H1 (cell line): ENCODE measurements at regions of chr16 and their contacts with region 1.

Region 1: GRCh38 chr16:68760671-68761275 is 23.7 kb downstream of the CDH1 start:
- DNase-seq: no peak
- H3K4me3 ChIP-seq: no peak overlapping the region
- H3K27ac ChIP-seq: no peak overlapping the region
- H3K4me1 ChIP-seq: peaks cover 17 to 39% (median 36%) of the 10 kb centered on the region in 4 experiments
- H3K27me3 ChIP-seq: no peaks in the 10 kb centered on the region
- CTCF ChIP-seq: no peak
- EP300 ChIP-seq: no peak
- POLR2A ChIP-seq: no peak
- RAD21 ChIP-seq: no peak

Region 2: DNA sequence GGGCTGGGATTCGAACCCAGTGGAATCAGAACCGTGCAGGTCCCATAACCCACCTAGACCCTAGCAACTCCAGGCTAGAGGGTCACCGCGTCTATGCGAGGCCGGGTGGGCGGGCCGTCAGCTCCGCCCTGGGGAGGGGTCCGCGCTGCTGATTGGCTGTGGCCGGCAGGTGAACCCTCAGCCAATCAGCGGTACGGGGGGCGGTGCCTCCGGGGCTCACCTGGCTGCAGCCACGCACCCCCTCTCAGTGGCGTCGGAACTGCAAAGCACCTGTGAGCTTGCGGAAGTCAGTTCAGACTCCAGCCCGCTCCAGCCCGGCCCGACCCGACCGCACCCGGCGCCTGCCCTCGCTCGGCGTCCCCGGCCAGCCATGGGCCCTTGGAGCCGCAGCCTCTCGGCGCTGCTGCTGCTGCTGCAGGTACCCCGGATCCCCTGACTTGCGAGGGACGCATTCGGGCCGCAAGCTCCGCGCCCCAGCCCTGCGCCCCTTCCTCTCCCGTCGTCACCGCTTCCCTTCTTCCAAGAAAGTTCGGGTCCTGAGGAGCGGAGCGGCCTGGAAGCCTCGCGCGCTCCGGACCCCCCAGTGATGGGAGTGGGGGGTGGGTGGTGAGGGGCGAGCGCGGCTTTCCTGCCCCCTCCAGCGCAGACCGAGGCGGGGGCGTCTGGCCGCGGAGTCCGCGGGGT is 23.6 kb before region 1 on chr16 and contains the start of gene CDH1:
- CTCF ChIA-PET with region 1: interaction called, 4 read pairs
- POLR2A ChIA-PET with region 1: interaction called, 30 read pairs
- DNase-seq: peak; percentile 86 to 97
- H3K4me3 ChIP-seq: peak within 1 kb of the TSS; percentile 60 to 90 (median 84)
- H3K27ac ChIP-seq: peak within 1 kb of the TSS; percentile 50
- H3K4me1 ChIP-seq: peaks cover 0 to 7% (median 2%) of the 10 kb centered on the region in 4 experiments; a peak in 3 of 7 replicates
- H3K27me3 ChIP-seq: no peaks in the 10 kb centered on the region
- CTCF ChIP-seq: no peak
- EP300 ChIP-seq: no peak
- POLR2A ChIP-seq: peak; percentile 98 to 99
- RAD21 ChIP-seq: 0 out of 4 replicates have a peak, but pooled peaks of 1 of the 2 experiments have one; percentile 2
- total RNA-seq, gene CDH1: 265 and 319 TPM in 2 replicates

Region 3: GRCh38 chr16:68744369-68745280 is 16.1 kb before region 1 on chr16:
- CTCF ChIA-PET with region 1: interaction called, 4 read pairs
- POLR2A ChIA-PET with region 1: interaction called, 33 read pairs
- DNase-seq: peak in 1 of 2 experiments; percentile 63
- H3K4me3 ChIP-seq: peak overlapping the region in 3 of 4 experiments; percentile 5 to 39 (median 7); a peak in 5 of 8 replicates
- H3K27ac ChIP-seq: peak overlapping the region; percentile 63
- H3K4me1 ChIP-seq: peaks cover 8 to 29% (median 18%) of the 10 kb centered on the region in 4 experiments
- H3K27me3 ChIP-seq: no peaks in the 10 kb centered on the region
- CTCF ChIP-seq: no peak
- EP300 ChIP-seq: peak in 1 of 2 experiments; percentile 61; a peak in 1 of 3 replicates
- POLR2A ChIP-seq: no peak
- RAD21 ChIP-seq: 0 out of 4 replicates have a peak, but pooled peaks of 1 of the 2 experiments have one; percentile 18